OCI-LY7 (cell line): ENCODE measurements at regions of chr6 and their contacts with region 1.

Region 1: GRCh38 chr6:28399350-28400121 is at the start of gene ZSCAN12:
- DNase-seq: peak; percentile 94
- H3K4me3 ChIP-seq: peak within 1 kb of the TSS; percentile 88
- H3K27ac ChIP-seq: peak within 1 kb of the TSS; percentile 80
- H3K4me1 ChIP-seq: peaks cover 39% of the 10 kb centered on the region
- CTCF ChIP-seq: peak; percentile 77
- total RNA-seq, gene ZSCAN12: 10.2 and 10.5 TPM in 2 replicates

Region 2: GRCh38 chr6:28252009-28252975 is 147.2 kb before region 1 on chr6 and contains the start of gene ZKSCAN4:
- CTCF ChIA-PET with region 1: no interaction called
- POLR2A ChIA-PET with region 1: no interaction called
- intact Hi-C with region 1: loop called (anchors 2 kb)
- DNase-seq: peak; percentile 92
- H3K4me3 ChIP-seq: peak within 1 kb of the TSS; percentile 99
- H3K27ac ChIP-seq: peak within 1 kb of the TSS; percentile 47
- H3K4me1 ChIP-seq: peaks cover 21% of the 10 kb centered on the region
- CTCF ChIP-seq: no peak
- total RNA-seq, gene ZKSCAN4: 7.9 and 9.3 TPM in 2 replicates

Region 3: DNA sequence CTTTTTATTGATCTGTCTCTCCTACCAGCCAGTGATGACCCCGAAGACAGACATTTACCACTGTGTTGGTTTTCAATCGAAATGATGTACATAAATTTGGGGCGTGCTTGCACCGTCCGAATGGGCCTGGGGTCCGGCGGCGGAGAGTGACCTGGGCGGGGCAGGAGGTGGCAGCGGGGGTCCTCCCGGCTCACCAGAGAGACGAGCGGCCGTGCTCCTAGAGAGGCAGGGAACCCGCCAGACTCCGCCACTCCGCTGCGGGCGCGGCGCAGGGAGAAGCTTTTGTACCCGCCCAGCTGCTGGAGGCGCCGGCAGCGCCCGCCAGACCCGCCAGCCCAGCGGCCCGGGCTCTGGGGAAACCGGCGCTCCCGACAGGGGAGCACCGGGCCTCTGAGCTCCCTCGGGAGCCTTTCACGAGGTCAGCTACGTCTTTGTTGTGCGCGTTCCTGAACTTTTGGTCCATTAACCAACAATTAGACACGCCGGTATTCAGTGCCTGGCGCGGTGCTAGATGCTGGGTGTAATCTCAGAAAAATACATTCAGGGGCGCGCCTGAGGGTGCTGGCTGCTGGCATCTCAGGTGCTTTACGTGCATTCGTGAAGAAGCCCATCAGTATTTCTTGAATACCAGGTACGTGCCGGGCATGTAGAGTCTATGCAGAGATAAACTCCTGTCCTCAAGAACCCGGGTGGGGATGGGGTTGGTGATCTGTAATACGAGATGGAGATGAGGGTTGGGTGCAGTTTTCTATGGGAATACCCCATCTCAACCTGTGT is 118.1 kb before region 1 on chr6 and contains the start of gene PGBD1:
- CTCF ChIA-PET with region 1: no interaction called
- POLR2A ChIA-PET with region 1: interaction called, 3 read pairs
- intact Hi-C with region 1: loop called (anchors 1 kb)
- DNase-seq: peak; percentile 71
- H3K4me3 ChIP-seq: peak within 1 kb of the TSS; percentile 69
- H3K27ac ChIP-seq: no peak within 1 kb of the TSS
- H3K4me1 ChIP-seq: peaks cover 7% of the 10 kb centered on the region
- CTCF ChIP-seq: no peak
- total RNA-seq, gene PGBD1: 1.6 and 3.3 TPM in 2 replicates

Region 4: DNA sequence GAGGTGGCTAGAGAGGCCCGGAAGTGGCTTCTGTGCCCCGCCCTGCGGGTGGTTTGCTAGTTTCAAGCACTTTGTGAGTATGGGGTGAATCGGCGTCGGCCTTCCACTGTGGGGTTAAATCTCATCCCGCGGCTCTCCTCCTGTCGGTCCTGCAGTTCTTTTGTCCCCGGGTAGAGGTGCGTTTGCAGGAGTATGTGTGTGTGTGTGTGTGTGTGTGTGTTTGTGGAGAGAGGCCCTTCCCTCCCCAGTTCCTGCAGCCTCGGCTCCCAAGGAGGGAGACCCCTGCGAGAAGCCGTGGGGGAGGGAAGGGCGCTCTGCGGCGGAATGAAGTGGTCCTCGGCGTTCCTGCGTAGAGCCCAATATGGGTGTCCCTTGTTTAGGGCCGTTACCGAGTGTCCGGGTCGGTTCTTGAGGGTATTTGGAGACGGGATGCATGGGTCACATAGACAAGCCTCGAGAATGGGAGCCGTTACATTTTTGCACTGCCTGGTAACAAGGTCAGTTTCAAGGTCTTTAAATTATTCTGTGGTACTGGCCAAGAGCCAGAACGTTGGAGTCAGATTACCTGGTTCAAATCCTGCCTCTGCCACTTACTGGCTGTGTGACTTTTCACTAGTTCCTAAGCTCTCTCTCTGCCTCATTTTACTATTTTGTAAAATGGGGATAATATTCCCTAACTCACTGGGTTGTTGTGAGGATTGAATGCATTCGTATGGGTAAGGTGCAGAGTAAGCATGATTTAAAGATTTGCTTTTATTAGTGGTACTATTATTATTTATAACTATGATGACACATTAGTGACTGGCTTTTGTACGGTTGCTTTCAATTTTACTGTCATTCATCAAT is 49.4 kb before region 1 on chr6 and contains the start of gene ZKSCAN3:
- CTCF ChIA-PET with region 1: no interaction called
- POLR2A ChIA-PET with region 1: no interaction called
- intact Hi-C with region 1: loop called (anchors 2 kb)
- DNase-seq: peak; percentile 85
- H3K4me3 ChIP-seq: peak within 1 kb of the TSS; percentile 79
- H3K27ac ChIP-seq: peak within 1 kb of the TSS; percentile 31
- H3K4me1 ChIP-seq: peaks cover 8% of the 10 kb centered on the region
- CTCF ChIP-seq: no peak
- total RNA-seq, gene ZKSCAN3: 2.5 and 3.2 TPM in 2 replicates

Region 5: DNA sequence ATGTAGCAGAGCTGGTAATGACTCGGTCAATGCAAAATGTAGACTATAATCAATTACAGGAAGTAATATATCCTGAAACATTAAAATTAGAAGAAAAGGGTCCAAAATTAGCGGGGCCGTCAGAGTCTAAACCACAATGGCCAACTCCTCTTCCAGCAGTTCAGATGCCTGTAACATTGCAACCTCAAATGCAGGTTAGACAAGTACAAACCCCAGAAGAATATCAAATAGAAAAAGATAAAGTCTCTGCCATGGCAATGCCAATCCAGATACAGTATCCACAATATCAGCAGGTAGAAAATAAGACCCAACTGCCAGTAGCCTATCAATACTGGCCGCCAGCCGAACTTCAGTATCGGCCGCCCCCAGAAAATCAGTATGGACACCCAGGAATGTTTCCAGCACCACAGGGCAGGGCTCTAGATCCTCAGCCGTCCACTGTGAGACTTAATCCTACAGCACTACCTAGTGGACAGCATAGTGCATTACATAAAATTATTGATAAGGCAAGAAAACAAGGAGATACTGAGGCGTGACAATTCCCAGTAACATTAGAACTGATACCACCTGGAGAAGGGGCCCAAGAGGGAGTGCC is 284.5 kb after region 1 on chr6:
- CTCF ChIA-PET with region 1: no interaction called
- POLR2A ChIA-PET with region 1: no interaction called
- intact Hi-C with region 1: loop called (anchors 5 kb)
- DNase-seq: peak; percentile 65
- H3K4me3 ChIP-seq: no peak overlapping the region
- H3K27ac ChIP-seq: no peak overlapping the region
- H3K4me1 ChIP-seq: peaks cover 3% of the 10 kb centered on the region
- CTCF ChIP-seq: peak; percentile 85

Region 6: GRCh38 chr6:28981833-28982475 is 582.4 kb after region 1 on chr6:
- CTCF ChIA-PET with region 1: no interaction called
- POLR2A ChIA-PET with region 1: no interaction called
- intact Hi-C with region 1: loop called (anchors 5 kb)
- DNase-seq: peak; percentile 84
- H3K4me3 ChIP-seq: peak overlapping the region; percentile 98
- H3K27ac ChIP-seq: peak overlapping the region; percentile 37
- H3K4me1 ChIP-seq: peaks cover 22% of the 10 kb centered on the region
- CTCF ChIP-seq: 0 out of 2 replicates have a peak, but pooled peaks have one; percentile 26